ENCODE measurements at regions of chr5 and their contacts with region 1.

Region 1: DNA sequence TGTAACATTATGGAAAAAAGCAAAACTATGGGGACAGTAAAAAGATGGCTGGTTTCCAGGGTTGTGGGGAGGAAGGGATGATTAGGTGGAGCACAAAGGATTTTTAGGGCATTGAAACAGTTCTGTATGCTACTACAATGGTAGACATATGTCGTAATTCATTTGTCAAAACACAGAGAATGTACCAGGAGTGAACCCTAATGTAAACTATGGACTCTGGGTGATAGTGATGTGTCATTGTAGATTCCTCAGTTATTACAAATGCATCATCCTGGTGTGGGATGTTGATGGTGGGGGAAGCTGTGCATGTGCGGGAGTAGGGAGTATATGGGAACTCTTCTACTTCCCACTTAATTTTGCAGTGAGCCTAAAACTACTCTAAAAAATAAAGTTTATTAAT is 135.0 kb upstream of the GABRP start:
- DNase-seq: no peak
- H3K4me3 ChIP-seq: no peak overlapping the region
- H3K27ac ChIP-seq: no peak overlapping the region
- H3K4me1 ChIP-seq: no peaks in the 10 kb centered on the region
- H3K27me3 ChIP-seq: no peaks in the 10 kb centered on the region
- CTCF ChIP-seq: no peak

Region 2: GRCh38 chr5:171342362-171343111 is 694.0 kb after region 1 on chr5:
- intact Hi-C with region 1: loop called (anchors 10 kb)
- DNase-seq: peak; percentile 41
- H3K4me3 ChIP-seq: no peak overlapping the region
- H3K27ac ChIP-seq: no peak overlapping the region
- H3K4me1 ChIP-seq: no peaks in the 10 kb centered on the region
- H3K27me3 ChIP-seq: no peaks in the 10 kb centered on the region
- CTCF ChIP-seq: no peak